MCF 10A (cell line): ENCODE measurements at regions of chr1 and their contacts with region 1.

Region 1: DNA sequence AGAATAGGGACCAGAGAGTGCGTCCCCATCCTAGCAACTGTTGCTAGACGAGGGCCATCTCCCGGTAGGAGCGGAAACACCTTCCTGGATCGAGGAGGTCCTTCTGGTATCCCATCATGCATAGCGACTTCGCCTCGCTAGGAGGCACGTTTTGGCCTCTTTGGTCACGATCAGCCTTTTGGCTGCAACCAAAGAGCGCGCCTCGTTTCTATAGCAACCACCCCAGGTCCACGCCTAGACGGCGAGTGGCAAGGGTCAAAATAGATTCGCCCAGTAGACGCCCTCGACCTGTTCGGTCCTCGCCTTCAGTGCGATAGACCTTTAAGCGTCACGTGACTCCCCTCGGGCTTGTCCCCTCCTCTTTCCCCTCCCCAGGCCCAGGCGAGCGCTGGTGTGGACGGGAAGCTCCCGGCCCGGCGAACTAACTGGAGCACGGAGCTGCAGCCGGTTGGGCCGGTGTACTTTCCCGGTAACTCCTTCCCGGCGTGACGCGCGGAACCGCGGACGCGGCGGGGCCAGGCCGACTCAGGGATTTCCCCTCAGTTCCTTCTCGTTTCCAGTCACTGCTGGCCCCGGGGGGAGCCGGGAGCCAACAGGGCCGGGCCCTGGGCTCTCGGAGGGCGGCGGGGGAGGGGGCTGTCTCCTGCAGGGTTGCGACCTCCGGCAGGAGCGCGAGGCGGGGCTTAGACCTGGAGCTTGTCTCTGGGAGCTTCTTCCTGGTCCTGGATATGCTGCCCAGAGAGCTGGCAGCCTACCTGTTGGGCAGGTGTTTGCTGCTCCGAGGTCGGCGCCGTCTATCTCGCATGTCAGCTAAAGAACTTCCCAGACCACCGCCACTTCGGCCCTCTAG is at the start of gene DNAJC16:
- DNase-seq: peak; percentile 100
- H3K4me3 Mint-ChIP-seq: peak within 1 kb of the TSS; percentile 92
- H3K27ac Mint-ChIP-seq: peak within 1 kb of the TSS; percentile 100
- H3K4me1 Mint-ChIP-seq: peaks cover 16% of the 10 kb centered on the region
- H3K27me3 Mint-ChIP-seq: no peaks in the 10 kb centered on the region
- CTCF ChIP-seq: no peak
- total RNA-seq, gene DNAJC16: 17.2 and 26.5 TPM in 2 replicates

Region 2: GRCh38 chr1:15475752-15476314 is 50.9 kb before region 1 on chr1 and contains the start of gene CELA2B:
- CTCF ChIA-PET with region 1: no interaction called
- POLR2A ChIA-PET with region 1: no interaction called
- intact Hi-C with region 1: no loop called
- DNase-seq: no peak
- H3K4me3 Mint-ChIP-seq: no peak within 1 kb of the TSS
- H3K27ac Mint-ChIP-seq: no peak within 1 kb of the TSS
- H3K4me1 Mint-ChIP-seq: no peaks in the 10 kb centered on the region
- H3K27me3 Mint-ChIP-seq: no peaks in the 10 kb centered on the region
- CTCF ChIP-seq: no peak
- total RNA-seq, gene CELA2B: not detected in 2 replicates

Region 3: DNA sequence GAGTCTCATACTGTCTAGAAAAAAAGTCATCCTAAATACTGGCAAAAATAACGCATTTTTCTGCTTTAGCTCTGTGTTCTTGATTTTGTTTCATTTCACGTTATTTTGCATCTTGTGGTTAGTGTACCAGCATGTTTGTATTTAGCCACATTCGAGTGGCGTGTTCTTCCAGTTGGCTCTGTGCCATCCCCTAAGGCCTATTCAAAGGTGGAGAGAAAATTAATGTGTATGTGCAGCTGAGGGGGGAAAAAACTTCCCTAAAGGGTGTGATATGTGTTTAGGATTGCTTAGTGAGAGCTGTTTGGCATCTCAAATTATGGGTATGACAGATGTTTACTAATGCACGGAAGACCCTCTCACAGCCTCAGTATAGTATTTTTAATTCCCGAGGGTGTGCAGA is 12.1 kb after region 1 on chr1:
- CTCF ChIA-PET with region 1: no interaction called
- POLR2A ChIA-PET with region 1: interaction called, 10 read pairs
- intact Hi-C with region 1: no loop called
- DNase-seq: peak; percentile 41
- H3K4me3 Mint-ChIP-seq: no peak overlapping the region
- H3K27ac Mint-ChIP-seq: no peak overlapping the region
- H3K4me1 Mint-ChIP-seq: no peaks in the 10 kb centered on the region
- H3K27me3 Mint-ChIP-seq: no peaks in the 10 kb centered on the region
- CTCF ChIP-seq: no peak

Region 4: DNA sequence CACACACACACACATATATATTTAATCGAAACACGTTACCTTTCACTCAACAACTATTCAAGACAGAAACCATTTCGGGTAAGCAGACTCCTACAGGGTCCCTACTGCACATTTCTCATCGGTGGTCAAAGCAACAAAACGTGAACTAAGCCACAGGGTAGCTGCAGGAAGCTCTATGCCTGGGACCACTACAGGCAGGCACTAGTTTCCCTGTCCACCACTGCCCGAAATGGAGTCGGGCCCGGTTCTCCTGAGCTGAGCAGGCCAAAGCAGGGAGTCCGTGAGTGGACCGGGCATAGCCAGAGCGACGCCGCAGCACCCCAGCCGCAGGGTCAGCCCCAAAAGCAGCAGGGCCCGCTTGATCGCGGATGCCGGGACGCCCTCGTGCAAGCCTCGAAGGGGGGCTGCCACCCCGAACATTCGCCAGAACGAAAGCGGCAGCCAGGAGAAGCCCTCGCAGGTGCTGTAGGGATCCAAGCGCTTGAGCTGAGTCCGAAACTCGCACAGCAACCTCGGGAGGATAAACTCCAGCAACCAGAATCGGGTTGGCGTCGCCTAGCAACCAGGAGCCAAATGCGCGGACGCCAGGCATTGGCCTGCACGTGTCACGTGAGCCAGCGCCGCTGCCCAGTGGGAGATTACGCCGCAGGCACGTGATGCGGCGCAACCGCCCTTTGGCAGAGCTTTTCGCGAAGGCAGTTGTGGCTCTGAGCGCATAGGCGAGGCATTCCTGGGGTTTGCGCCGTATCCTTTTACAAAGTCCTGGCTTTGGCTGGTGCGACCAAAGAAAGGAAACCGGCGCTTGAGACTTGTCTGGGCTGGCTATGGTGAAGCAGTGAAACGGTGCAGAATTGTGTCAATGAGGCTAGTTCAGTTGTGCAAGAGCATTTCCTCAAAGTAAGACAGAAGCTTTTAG is 76.6 kb after region 1 on chr1:
- CTCF ChIA-PET with region 1: no interaction called
- POLR2A ChIA-PET with region 1: interaction called, 15 read pairs
- intact Hi-C with region 1: no loop called
- DNase-seq: peak; percentile 95
- H3K4me3 Mint-ChIP-seq: peak overlapping the region; percentile 82
- H3K27ac Mint-ChIP-seq: peak overlapping the region; percentile 67
- H3K4me1 Mint-ChIP-seq: peaks cover 6% of the 10 kb centered on the region
- H3K27me3 Mint-ChIP-seq: no peaks in the 10 kb centered on the region
- CTCF ChIP-seq: no peak